Dorsolateral prefrontal cortex (tissue), 120 donors: ENCODE measurements at regions of chr16 and their contacts with region 1.

Region 1: GRCh38 chr16:75402821-75403475 is 30.4 kb downstream of the CFDP1 start:
- DNase-seq: no peak
- H3K4me3 ChIP-seq: no peak overlapping the region
- H3K27ac ChIP-seq: peak overlapping the region in 18 of 59 donors; percentile 9 to 64 (median 32)
- H3K27me3 ChIP-seq: no peaks in the 10 kb centered on the region
- CTCF ChIP-seq: peak; percentile 47 to 83 (median 72)

Region 2: GRCh38 chr16:75198135-75198600 is 204.8 kb before region 1 on chr16:
- intact Hi-C with region 1: loop called in 1 of 2 experiments (anchors 5 kb)
- DNase-seq: peak in 4 of 10 donors; percentile 19 to 38 (median 26)
- H3K4me3 ChIP-seq: no peak overlapping the region
- H3K27ac ChIP-seq: no peak overlapping the region
- H3K27me3 ChIP-seq: peaks cover 0 to 10% (median 0%) of the 10 kb centered on the region in 45 donors
- CTCF ChIP-seq: no peak

Region 3: GRCh38 chr16:75305364-75306098 is 97.4 kb before region 1 on chr16:
- intact Hi-C with region 1: no loop called
- DNase-seq: peak in 3 of 10 donors; percentile 16 to 61 (median 50)
- H3K4me3 ChIP-seq: peak overlapping the region in 15 of 59 donors; percentile 0 to 31 (median 7)
- H3K27ac ChIP-seq: peak overlapping the region in 58 of 59 donors; percentile 7 to 96 (median 86)
- H3K27me3 ChIP-seq: no peaks in the 10 kb centered on the region
- CTCF ChIP-seq: no peak

Region 4: DNA sequence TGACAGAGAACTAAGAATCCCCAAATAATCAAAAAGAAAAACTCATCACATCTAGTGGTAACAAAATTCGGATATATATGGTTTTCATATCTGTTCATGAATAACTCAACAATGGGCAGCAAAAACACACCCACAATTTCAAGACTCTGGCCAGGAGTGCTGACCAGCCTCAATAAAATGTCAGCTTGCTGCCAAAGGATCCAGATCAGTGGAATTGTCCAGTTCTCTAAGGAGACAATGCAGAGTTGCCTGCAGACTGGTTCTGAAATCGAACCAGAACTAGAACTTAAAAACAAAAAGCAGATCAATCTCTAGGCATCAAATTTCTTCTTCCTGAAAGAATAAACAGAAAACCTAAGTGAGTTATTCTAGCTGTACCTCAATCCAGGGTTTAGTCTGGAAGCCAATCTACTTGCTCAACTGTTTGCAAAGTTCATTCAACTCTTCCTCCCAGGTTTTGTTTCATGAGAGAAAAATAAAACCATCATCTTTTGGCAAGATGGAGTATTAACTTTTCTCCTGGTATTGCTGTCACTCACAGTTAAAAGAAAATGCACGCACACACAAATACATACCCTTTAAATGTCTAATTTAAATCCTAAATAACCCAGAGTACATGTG is 30.6 kb before region 1 on chr16:
- intact Hi-C with region 1: no loop called
- DNase-seq: no peak
- H3K4me3 ChIP-seq: no peak overlapping the region
- H3K27ac ChIP-seq: no peak overlapping the region
- H3K27me3 ChIP-seq: no peaks in the 10 kb centered on the region
- CTCF ChIP-seq: no peak

Region 5: DNA sequence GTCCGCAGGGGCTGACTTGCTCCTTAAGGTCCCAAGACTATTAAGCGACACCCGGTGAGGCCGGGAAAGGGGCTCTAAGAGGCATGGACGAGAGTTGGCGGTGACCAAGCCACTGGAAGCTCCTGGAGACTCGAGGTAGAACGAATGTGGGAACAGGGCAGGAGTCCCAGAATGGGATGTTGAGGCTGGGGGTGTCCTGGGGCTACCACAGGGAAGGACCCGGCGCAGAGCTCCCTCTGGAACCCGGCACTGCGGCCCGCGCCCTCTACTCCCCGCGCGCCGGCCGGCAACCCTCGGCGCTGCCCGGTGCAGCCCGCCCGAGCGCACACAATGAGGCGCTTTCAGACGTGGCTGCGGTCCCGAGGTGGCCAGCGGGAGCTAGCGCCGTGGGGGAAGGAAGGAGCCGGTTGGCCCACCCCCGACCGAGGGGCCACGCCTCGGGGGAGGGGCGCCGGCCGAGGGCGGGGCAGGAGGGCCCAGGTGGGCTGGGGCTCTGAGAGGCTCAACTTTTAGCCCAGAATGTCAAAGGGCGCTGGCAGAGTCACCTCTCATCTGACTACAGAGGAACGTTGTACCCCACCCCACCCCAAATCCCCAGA is 92.2 kb after region 1 on chr16 and contains the start of gene CHST6:
- intact Hi-C with region 1: no loop called
- DNase-seq: peak; percentile 52 to 84 (median 66)
- H3K4me3 ChIP-seq: peak within 1 kb of the TSS; percentile 42 to 80 (median 65)
- H3K27ac ChIP-seq: peak within 1 kb of the TSS in 58 of 59 donors; percentile 5 to 90 (median 80)
- H3K27me3 ChIP-seq: peaks cover 0 to 5% (median 0%) of the 10 kb centered on the region in 45 donors
- CTCF ChIP-seq: peak in 2 of 56 donors; percentile 12 to 29
- total RNA-seq, gene CHST6: 4.8 to 43.3 (median 16.5) TPM

Region 6: DNA sequence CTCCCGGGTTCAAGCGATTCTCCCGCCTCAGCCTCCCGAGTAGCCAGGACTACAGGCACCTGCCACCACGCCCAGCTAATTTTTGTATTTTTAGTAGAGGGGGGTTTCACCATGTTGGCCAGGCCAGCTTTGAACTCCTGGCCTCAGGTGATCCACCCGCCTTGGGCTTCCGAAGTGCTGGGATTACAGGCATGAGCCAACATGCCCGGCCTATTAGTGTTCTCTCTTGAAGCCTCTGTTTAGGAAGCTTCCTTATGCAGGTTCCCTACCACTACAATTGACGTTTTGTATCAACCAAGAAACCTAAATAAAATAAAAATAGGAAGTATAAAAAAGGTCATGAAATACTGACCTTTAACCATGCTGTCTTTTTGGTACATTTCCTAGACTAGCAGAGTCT is 116.9 kb after region 1 on chr16:
- intact Hi-C with region 1: no loop called
- DNase-seq: no peak
- H3K4me3 ChIP-seq: no peak overlapping the region
- H3K27ac ChIP-seq: no peak overlapping the region
- H3K27me3 ChIP-seq: no peaks in the 10 kb centered on the region
- CTCF ChIP-seq: no peak